A673 (cell line): ENCODE measurements at regions of chr6 and their contacts with region 1.

Region 1: GRCh38 chr6:42043787-42044475 is 6.4 kb upstream of the TAF8 start:
- DNase-seq: peak; percentile 90
- H3K4me3 ChIP-seq: no peak overlapping the region
- H3K27ac ChIP-seq: no peak overlapping the region
- H3K4me1 ChIP-seq: peaks cover 32% of the 10 kb centered on the region
- H3K27me3 ChIP-seq: no peaks in the 10 kb centered on the region
- CTCF ChIP-seq: peak; percentile 95

Region 2: DNA sequence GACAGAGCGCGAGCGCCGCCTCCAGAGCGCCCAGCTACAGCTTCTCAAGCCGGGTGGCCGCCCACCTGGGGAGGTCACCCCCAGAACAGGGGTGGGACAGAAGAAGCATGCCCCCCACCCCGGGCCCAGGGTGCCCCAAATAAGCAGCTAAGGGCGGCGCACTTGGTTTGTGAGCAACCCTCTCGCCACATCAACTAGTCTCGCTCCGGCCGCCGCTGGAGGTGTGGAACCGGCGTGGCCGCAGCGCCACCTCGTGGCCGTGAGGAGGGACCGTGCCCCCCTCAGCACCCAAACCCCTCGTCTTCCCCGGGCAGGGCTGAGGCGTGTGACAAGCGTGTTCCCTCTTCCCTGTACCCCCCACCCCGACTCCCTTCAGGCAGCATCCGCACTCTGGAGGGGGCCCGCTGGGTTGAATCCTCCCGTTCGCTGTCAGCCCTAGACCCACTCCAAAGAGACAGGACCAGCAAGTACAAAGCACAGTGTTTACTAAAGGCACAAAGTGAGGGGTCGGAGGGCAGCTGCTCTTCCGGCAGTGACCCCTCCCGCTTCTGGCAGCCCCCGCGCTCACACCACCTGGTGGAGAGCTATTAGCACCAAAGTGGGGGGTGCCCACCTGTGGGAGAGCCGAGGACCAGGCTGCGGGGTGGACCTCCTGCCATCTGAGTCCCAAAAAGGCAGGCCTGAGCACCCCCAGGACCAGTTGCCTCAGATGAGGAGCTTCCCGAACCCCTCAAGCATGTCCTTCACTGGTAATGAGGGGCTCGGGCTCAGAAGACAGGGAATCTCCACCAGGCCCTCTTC is 360.2 kb before region 1 on chr6:
- CTCF ChIA-PET with region 1: no interaction called
- POLR2A ChIA-PET with region 1: no interaction called
- intact Hi-C with region 1: loop called (anchors 10 kb)
- DNase-seq: peak; percentile 89
- H3K4me3 ChIP-seq: peak overlapping the region; percentile 42
- H3K27ac ChIP-seq: peak overlapping the region; percentile 66
- H3K4me1 ChIP-seq: peaks cover 19% of the 10 kb centered on the region
- H3K27me3 ChIP-seq: no peaks in the 10 kb centered on the region
- CTCF ChIP-seq: peak; percentile 95

Region 3: GRCh38 chr6:41787219-41787917 is 256.6 kb before region 1 on chr6 and contains the start of gene TOMM6:
- CTCF ChIA-PET with region 1: interaction called, 12 read pairs
- POLR2A ChIA-PET with region 1: no interaction called
- intact Hi-C with region 1: no loop called
- DNase-seq: peak; percentile 95
- H3K4me3 ChIP-seq: peak within 1 kb of the TSS; percentile 86
- H3K27ac ChIP-seq: peak within 1 kb of the TSS; percentile 86
- H3K4me1 ChIP-seq: peaks cover 5% of the 10 kb centered on the region
- H3K27me3 ChIP-seq: no peaks in the 10 kb centered on the region
- CTCF ChIP-seq: no peak; the same call in none of the 2 replicates
- total RNA-seq, gene TOMM6: 197 and 206 TPM in 2 replicates

Region 4: GRCh38 chr6:41846666-41847237 is 197.2 kb before region 1 on chr6:
- CTCF ChIA-PET with region 1: interaction called, 7 read pairs
- POLR2A ChIA-PET with region 1: no interaction called
- intact Hi-C with region 1: loop called (anchors 2 kb)
- DNase-seq: peak; percentile 77
- H3K4me3 ChIP-seq: no peak overlapping the region
- H3K27ac ChIP-seq: no peak overlapping the region
- H3K4me1 ChIP-seq: no peaks in the 10 kb centered on the region
- H3K27me3 ChIP-seq: no peaks in the 10 kb centered on the region
- CTCF ChIP-seq: peak; percentile 76